Activated naive CD4-positive, alpha-beta T cell treated with anti-CD3 and anti-CD28 coated beads for 36 hours (primary cell): ENCODE measurements at regions of chr4 and their contacts with region 1.

Region 1: DNA sequence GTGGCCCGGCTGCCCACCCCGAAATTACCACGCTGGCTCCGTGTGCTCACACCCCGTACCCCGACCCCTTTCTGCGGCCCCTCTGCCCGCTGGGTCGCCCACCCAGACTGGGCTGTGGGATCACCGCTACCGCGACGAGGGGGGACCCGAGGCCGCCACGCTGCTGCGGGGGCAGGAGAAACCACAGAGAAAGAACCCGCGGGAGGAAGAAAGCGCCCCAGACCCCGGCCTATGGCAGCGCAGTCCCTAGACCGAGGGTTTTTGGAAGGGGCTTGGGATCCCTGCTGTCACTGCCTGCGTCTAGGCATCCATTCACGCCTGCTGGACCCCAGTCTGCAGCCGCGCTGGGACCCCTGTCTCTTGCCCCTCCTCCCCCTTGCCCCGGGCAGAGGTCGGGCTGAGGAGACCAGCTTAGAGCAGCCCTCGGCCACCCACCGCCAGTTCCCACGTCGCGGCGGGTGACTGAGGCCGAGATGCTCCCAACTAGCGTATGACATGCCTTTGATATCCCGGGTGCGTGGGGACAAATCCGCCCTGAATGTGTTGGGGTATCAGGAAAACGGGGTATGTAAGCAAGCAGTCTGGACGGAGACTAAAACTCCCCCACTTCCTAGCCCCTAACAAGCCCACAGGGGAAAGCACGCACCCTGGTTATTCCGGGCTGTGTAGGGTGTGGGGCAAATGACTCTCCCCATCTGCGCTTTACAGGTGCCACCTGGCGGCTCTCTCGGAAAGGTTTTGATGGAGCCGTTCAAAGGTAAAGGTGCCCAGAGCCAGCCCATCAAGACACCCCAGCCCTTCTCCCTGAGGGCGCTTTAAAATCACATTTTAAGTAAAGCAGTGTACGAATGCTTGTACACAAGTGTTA is 862 bp upstream of the INPP4B start:
- DNase-seq: peak; percentile 90
- H3K4me3 Mint-ChIP-seq: peak overlapping the region; percentile 86
- H3K27ac Mint-ChIP-seq: peak overlapping the region; percentile 84
- H3K4me1 Mint-ChIP-seq: peaks cover 15% of the 10 kb centered on the region
- H3K27me3 Mint-ChIP-seq: no peaks in the 10 kb centered on the region

Region 2: GRCh38 chr4:141158219-141158618 is 1688.7 kb before region 1 on chr4:
- CTCF ChIA-PET with region 1: no interaction called
- intact Hi-C with region 1: loop called (anchors 1 kb)
- DNase-seq: no peak
- H3K4me3 Mint-ChIP-seq: no peak overlapping the region
- H3K27ac Mint-ChIP-seq: no peak overlapping the region
- H3K4me1 Mint-ChIP-seq: no peaks in the 10 kb centered on the region
- H3K27me3 Mint-ChIP-seq: peaks cover 10% of the 10 kb centered on the region

Region 3: DNA sequence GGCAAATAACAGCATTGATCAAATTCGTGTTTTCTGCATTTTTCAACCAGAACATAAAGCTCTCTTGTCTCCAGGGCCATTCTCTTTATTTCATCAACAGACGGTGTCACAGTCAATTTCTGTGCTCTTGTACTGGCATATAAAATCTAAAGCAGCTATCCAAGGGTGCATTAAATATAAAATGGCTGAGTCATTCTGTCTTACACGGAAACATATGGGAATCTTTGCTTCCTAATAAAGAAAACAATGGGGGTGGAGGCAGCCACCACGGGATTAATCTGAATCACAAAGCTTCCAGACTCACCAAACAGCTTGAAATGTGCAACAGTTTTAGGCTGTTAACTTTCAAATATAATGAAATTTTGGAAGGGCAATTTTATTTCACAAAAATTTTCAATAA is 1078.0 kb before region 1 on chr4:
- CTCF ChIA-PET with region 1: no interaction called
- intact Hi-C with region 1: loop called (anchors 10 kb)
- DNase-seq: no peak
- H3K4me3 Mint-ChIP-seq: no peak overlapping the region
- H3K27ac Mint-ChIP-seq: no peak overlapping the region
- H3K4me1 Mint-ChIP-seq: peaks cover 5% of the 10 kb centered on the region
- H3K27me3 Mint-ChIP-seq: peaks cover 4% of the 10 kb centered on the region

Region 4: DNA sequence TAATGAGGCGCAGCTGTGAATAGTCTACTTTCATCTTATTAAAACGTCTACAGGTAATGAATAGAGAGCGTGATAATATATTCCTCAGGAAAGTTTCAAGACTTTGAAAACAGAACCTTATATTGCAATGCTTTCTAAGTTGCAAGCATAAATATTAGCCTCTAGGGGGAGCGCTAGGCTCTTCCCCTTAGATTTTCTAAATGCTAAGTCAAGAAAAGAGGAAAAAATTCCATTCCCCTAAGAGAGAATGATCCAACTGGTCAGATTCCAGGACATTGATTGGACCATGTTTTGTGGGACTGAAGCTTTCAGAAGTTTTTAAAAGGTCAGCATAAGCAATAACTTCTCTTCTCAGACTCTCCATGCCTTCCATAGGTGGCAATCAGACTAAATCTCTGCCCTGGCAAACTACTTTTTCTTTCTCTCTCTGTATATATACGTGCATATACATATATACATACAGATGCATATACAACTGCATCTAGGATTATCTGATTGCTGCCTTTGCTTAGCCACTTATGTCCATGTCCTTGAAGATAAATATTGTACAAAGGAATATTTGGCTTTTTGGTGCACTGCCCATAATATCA is 493.7 kb before region 1 on chr4:
- CTCF ChIA-PET with region 1: interaction called, 7 read pairs
- intact Hi-C with region 1: loop called (anchors 1 kb)
- DNase-seq: no peak
- H3K4me3 Mint-ChIP-seq: peak overlapping the region; percentile 48
- H3K27ac Mint-ChIP-seq: peak overlapping the region; percentile 90
- H3K4me1 Mint-ChIP-seq: peaks cover 94% of the 10 kb centered on the region
- H3K27me3 Mint-ChIP-seq: no peaks in the 10 kb centered on the region

Region 5: DNA sequence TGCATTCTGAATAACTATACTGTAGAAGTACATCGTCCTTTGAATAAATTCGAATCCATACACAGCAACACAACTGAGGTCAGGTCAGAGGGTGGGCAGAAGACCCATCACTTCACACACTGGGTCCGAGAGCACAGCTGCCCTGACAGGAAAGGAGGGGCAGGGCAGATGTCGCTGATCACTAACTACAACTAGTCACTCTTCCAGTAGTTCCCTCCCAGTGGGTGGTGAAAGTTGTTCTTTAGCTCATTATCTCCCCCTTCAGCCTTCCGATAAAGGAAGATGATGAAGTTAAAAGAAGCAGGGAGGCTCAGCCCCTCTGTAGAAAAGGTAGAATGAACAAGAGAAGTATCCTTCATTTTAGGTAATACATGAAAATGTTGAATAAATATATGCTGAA is 279.8 kb before region 1 on chr4:
- CTCF ChIA-PET with region 1: no interaction called
- intact Hi-C with region 1: loop called (anchors 2 kb)
- DNase-seq: peak; percentile 77
- H3K4me3 Mint-ChIP-seq: peak overlapping the region; percentile 77
- H3K27ac Mint-ChIP-seq: peak overlapping the region; percentile 94
- H3K4me1 Mint-ChIP-seq: peaks cover 48% of the 10 kb centered on the region
- H3K27me3 Mint-ChIP-seq: no peaks in the 10 kb centered on the region

Region 6: DNA sequence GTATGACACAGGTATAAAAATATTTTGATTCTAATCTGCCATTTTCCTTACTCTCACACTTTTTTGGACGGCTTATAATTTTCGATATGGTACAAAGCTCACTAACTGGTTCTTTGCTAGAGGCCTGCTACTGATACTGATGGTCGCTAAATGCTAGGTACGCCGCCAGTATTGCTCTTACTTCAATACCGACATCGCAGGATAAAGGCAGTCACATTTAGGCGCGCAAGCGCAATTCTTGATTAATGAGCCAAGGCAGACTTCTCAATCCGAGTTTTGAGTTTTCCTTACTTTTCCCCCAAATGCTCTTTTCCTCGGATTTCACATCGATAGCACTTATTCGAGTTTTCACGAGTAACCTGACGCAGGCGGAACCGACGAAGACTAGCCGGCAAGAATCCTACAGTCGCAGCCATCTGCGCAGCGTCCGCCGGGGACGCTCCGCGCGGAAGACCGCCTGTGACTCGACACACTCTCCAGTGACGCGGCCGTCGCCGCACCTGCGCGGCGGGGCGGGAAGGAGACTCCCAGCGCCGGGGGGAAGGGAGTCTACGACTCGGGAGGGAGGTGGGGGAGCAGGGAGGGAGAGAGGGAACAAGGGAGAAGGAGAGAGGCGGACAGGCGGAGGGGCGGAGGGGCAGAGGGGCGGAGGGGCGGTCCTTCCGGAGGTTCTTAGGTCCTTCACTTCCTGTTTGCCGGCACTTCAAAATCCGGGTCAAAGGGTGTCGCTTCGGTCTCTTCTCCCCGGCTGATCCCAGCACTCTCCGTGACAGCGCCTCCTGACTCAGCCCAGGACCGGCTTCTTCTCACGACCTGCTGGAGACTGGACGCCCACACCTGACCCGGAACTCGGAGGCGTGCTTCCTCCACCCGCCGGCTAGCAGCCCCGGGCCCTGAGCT is 337.5 kb after region 1 on chr4 and contains the start of gene USP38:
- CTCF ChIA-PET with region 1: no interaction called
- intact Hi-C with region 1: loop called (anchors 1 kb)
- DNase-seq: peak; percentile 93
- H3K4me3 Mint-ChIP-seq: peak within 1 kb of the TSS; percentile 95
- H3K27ac Mint-ChIP-seq: peak within 1 kb of the TSS; percentile 97
- H3K4me1 Mint-ChIP-seq: peaks cover 40% of the 10 kb centered on the region
- H3K27me3 Mint-ChIP-seq: no peaks in the 10 kb centered on the region
- total RNA-seq, gene USP38: 14.4 to 15.5 TPM